BJ (cell line): ENCODE measurements at regions of chr5 and their contacts with region 1.

Region 1: GRCh38 chr5:14004598-14005394 is 60.3 kb upstream of the DNAH5 start:
- DNase-seq: no peak
- H3K4me3 ChIP-seq: no peak overlapping the region
- H3K27me3 ChIP-seq: no peaks in the 10 kb centered on the region
- CTCF ChIP-seq: no peak

Region 2: GRCh38 chr5:13987843-13988464 is 16.8 kb before region 1 on chr5:
- CTCF ChIA-PET with region 1: interaction called, 12 read pairs
- POLR2A ChIA-PET with region 1: no interaction called
- DNase-seq: no peak
- H3K4me3 ChIP-seq: no peak overlapping the region
- H3K27me3 ChIP-seq: no peaks in the 10 kb centered on the region
- CTCF ChIP-seq: peak; percentile 81